Activated CD4-positive, alpha-beta memory T cell treated with anti-CD3 and anti-CD28 coated beads for 36 hours (primary cell): ENCODE measurements at regions of chr6 and their contacts with region 1.

Region 1: GRCh38 chr6:16761471-16762267 is 409 bp upstream of the ATXN1 start:
- DNase-seq: peak; percentile 92
- H3K4me3 Mint-ChIP-seq: peak overlapping the region; percentile 94
- H3K27ac Mint-ChIP-seq: peak overlapping the region; percentile 93
- H3K4me1 Mint-ChIP-seq: peaks cover 58% of the 10 kb centered on the region
- H3K27me3 Mint-ChIP-seq: no peaks in the 10 kb centered on the region

Region 2: DNA sequence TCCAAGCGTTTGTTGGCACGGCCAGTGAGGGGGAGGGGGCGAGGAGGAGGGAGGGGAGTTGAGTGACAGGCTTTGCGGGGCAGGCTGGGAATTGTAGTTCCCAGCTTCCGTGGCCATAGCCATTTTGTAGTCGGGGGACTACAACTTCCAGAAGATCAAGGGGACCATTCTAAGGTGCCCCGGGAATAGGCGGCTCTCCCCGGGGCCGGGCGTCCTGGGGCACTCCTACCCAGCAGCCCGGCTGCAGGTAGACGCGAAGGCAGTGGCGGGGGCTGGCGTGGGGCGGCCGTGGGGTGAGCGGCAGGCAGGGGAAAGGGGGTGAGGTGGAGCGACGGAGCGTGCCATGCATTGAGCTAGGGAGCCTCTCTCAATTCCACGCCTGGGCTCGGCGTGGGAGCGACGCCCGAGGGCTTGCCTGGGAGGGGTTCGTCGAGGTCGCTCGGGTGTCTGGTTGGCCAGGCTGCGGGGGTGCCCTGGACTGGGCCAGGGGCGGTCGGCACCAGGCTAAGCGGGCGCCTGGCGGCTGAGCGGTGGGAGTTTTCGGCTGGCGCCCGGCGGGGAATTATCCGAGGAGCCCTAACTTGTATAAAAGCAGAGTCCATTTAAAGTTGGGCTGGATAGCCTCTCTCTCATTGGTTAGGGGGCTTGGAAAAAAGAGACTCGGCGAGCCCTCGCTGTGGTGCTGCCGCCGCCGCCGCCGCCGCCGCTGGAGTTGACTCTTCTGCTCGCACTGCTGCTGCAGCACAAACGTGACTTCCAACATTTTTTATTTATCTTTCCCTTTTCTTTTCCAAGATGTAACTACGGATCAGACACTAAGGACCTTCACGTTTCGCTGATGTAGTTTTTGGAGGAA is 1516.1 kb before region 1 on chr6 and contains the start of gene JARID2:
- CTCF ChIA-PET with region 1: no interaction called
- POLR2A ChIA-PET with region 1: no interaction called
- intact Hi-C with region 1: loop called (anchors 5 kb)
- DNase-seq: peak; percentile 98
- H3K4me3 Mint-ChIP-seq: peak within 1 kb of the TSS; percentile 100
- H3K27ac Mint-ChIP-seq: peak within 1 kb of the TSS; percentile 94
- H3K4me1 Mint-ChIP-seq: peaks cover 18% of the 10 kb centered on the region
- H3K27me3 Mint-ChIP-seq: peaks cover 1% of the 10 kb centered on the region
- total RNA-seq, gene JARID2: 41.4 to 44.0 TPM

Region 3: GRCh38 chr6:16078064-16078463 is 683.6 kb before region 1 on chr6:
- CTCF ChIA-PET with region 1: no interaction called
- POLR2A ChIA-PET with region 1: no interaction called
- intact Hi-C with region 1: no loop called
- DNase-seq: no peak
- H3K4me3 Mint-ChIP-seq: no peak overlapping the region
- H3K27ac Mint-ChIP-seq: no peak overlapping the region
- H3K4me1 Mint-ChIP-seq: no peaks in the 10 kb centered on the region
- H3K27me3 Mint-ChIP-seq: peaks cover 2% of the 10 kb centered on the region

Region 4: DNA sequence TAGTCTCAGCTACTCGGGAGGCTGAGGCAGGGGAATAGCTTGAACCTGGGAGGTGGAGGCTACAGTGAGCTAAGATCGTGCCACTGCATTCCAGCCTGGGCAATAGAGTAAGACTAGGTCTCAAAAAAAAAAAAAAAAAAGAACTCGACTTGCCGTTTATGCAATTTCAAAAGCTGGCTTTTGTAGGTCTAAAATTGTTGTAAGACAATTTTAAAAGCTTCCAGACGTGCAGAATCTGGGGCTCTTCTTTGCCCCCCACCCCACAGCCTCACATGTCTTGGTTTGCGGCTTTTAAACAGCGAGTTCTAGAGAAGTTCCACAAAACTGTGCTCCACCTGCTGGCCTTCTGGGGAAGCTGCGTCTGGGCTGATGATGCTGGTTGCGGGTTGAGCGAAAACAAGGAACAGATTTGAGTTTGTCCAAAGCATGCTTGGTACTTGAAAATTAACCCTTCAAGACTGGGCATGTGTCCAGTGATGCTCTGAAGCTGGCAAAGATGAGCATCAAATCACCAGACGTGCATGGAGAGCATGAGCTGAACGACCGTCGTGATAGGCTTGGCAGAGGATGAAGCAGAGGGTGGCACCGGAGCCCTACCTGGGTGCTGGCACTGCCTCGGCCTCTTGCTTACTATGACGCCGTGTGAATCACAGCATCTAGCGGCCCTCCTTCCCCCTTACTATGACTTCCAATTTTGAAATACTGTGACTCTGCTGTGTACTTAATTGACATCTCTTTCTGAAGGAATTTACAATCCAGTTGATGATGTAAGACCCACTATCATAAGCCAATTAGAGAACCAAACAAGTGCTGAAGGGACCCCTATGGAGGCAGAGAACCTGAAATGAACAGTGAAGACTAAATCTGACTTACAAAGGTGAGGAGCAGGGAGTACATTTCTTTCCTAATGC is 351.9 kb before region 1 on chr6:
- CTCF ChIA-PET with region 1: interaction called, 29 read pairs
- POLR2A ChIA-PET with region 1: interaction called, 10 read pairs
- intact Hi-C with region 1: loop called (anchors 2 kb)
- DNase-seq: peak; percentile 82
- H3K4me3 Mint-ChIP-seq: peak overlapping the region; percentile 71
- H3K27ac Mint-ChIP-seq: peak overlapping the region; percentile 81
- H3K4me1 Mint-ChIP-seq: peaks cover 66% of the 10 kb centered on the region
- H3K27me3 Mint-ChIP-seq: no peaks in the 10 kb centered on the region

Region 5: DNA sequence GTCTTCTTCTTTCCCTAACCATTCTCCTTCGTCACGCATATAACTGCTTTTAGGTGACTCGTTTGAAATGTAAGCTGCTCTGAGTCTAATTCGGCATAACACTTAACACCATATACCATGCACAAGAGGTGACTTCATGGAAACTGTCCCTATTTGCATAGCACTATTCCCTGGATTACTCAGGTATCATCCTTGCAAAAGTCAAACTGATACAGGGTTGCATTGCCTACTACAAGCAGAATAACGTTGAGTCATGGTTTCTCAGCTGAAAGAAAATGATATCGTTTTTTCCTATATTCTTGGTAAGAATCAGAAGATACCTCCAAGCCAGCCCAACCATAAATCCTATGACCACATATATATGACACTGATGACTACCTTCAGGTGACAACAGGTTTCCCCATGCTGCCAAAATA is 227.9 kb before region 1 on chr6:
- CTCF ChIA-PET with region 1: interaction called, 9 read pairs
- POLR2A ChIA-PET with region 1: interaction called, 4 read pairs
- intact Hi-C with region 1: loop called (anchors 2 kb)
- DNase-seq: no peak
- H3K4me3 Mint-ChIP-seq: no peak overlapping the region
- H3K27ac Mint-ChIP-seq: peak overlapping the region; percentile 77
- H3K4me1 Mint-ChIP-seq: peaks cover 43% of the 10 kb centered on the region
- H3K27me3 Mint-ChIP-seq: no peaks in the 10 kb centered on the region

Region 6: GRCh38 chr6:16608444-16608843 is 153.2 kb before region 1 on chr6:
- CTCF ChIA-PET with region 1: no interaction called
- POLR2A ChIA-PET with region 1: no interaction called
- intact Hi-C with region 1: no loop called
- DNase-seq: no peak
- H3K4me3 Mint-ChIP-seq: no peak overlapping the region
- H3K27ac Mint-ChIP-seq: no peak overlapping the region
- H3K4me1 Mint-ChIP-seq: peaks cover 9% of the 10 kb centered on the region
- H3K27me3 Mint-ChIP-seq: no peaks in the 10 kb centered on the region

Region 7: GRCh38 chr6:16690608-16691198 is 71.0 kb before region 1 on chr6:
- CTCF ChIA-PET with region 1: interaction called, 10 read pairs
- POLR2A ChIA-PET with region 1: interaction called, 13 read pairs
- intact Hi-C with region 1: loop called (anchors 1 kb)
- DNase-seq: peak; percentile 82
- H3K4me3 Mint-ChIP-seq: peak overlapping the region; percentile 51
- H3K27ac Mint-ChIP-seq: peak overlapping the region; percentile 90
- H3K4me1 Mint-ChIP-seq: peaks cover 93% of the 10 kb centered on the region
- H3K27me3 Mint-ChIP-seq: no peaks in the 10 kb centered on the region

Region 8: DNA sequence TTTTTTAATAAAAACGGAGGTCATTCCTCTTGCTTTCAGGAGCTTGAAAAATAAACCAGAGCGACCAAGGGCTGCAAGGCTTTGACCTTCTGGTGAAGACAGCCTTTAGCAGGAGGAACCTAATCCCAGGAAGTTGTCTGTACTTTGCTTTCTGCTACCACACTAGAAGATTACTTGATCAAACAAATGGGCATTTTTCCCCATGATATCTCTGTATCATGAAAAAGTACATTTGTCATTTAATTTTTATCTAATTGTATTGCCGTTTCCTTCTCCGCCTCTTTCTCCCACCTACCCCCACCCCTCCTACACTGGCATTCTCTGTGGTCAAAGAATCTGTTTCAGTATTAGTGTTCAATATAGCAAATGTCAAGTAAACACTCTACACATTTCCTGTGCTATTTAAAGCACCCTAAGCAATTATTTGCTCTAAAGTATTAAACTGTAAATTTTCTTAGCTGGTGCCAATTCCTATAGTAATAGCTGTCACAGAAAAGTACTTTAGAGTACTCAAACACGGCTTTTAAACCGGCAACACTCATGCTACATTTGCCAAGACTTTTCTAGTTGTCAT is 30.1 kb before region 1 on chr6:
- CTCF ChIA-PET with region 1: interaction called, 12 read pairs
- POLR2A ChIA-PET with region 1: interaction called, 17 read pairs
- intact Hi-C with region 1: loop called (anchors 1 kb)
- DNase-seq: peak; percentile 62
- H3K4me3 Mint-ChIP-seq: peak overlapping the region; percentile 29
- H3K27ac Mint-ChIP-seq: peak overlapping the region; percentile 64
- H3K4me1 Mint-ChIP-seq: peaks cover 81% of the 10 kb centered on the region
- H3K27me3 Mint-ChIP-seq: no peaks in the 10 kb centered on the region

Region 9: DNA sequence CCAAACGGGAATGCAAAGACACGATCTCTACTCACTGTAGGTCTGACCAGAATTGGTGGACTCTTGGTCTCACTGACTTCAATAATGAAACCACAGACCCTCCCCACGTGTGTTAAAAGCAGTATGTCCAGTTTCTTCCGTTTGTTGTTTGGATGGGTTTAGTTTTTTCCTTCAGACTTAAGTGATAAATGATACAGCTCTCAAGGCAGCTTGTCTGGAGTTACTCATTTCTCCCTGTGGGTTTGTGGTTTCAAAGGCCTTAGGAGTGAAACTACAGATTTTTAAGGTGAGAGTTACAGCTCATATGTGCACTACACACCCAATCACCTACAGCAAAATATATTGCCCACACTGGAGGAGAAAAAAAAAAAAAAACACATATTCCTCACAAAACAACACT is 253.5 kb after region 1 on chr6:
- CTCF ChIA-PET with region 1: no interaction called
- POLR2A ChIA-PET with region 1: no interaction called
- intact Hi-C with region 1: loop called (anchors 2 kb)
- DNase-seq: peak; percentile 44
- H3K4me3 Mint-ChIP-seq: peak overlapping the region; percentile 54
- H3K27ac Mint-ChIP-seq: no peak overlapping the region
- H3K4me1 Mint-ChIP-seq: peaks cover 18% of the 10 kb centered on the region
- H3K27me3 Mint-ChIP-seq: peaks cover 27% of the 10 kb centered on the region